Dendritic cell treated with granulocyte-macrophage colony-stimulating factor and Interleukin-4, amounts not matched to agents 40 ng/mL and 50 ng/mL, for 4 days (primary cell): ENCODE measurements at regions of chr6 and their contacts with region 1.

Region 1: GRCh38 chr6:170554013-170554795 is at the start of gene TBP:
- H3K4me3 Mint-ChIP-seq: no peak within 1 kb of the TSS
- H3K27ac Mint-ChIP-seq: no peak within 1 kb of the TSS
- H3K4me1 Mint-ChIP-seq: no peaks in the 10 kb centered on the region
- H3K27me3 Mint-ChIP-seq: no peaks in the 10 kb centered on the region

Region 2: DNA sequence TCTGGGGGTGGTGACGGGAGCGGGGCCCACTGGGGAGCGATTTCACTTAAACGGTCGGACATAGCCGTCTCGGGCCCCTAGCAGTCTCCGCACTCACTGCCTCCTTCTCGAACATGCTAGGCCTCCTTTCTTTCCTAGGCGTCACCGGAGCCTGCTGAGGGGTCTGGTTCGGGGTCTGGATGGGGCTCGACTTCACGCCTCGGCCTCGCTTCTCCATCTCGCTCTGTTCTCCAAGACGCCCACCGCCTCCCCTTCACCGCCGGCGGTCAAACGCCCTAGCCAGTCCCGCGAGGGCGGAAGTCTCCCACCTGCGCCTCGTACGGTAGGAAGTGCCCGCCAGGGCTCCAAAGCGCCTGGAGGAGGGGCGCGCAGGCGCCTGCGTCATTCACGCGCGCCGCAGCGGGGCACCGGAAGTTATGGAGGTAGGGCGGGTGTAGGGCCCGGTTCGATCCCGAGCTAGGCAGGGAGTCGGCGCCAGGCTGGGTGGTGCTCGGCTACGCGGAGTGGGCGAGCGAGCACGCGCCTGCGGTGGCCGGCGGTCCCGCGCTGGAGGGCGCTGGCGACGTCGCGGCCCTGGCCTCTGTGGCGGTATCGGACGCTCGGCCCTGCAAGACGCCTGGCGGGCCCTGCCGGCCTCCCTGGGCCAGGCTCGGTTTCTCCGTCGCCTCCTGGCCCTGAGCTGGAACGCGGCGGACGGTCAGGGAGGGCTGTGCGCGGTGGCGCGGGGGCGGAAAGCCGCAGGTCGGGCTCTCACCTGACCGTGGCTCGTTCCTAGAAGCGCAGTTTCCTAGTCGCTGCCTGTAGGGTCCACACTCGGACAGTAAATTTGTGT is 802.7 kb before region 1 on chr6 and contains the starts of genes DYNLT2 and ERMARD:
- intact Hi-C with region 1: loop called (anchors 1 kb)
- H3K4me3 Mint-ChIP-seq: peak within 1 kb of the TSS; percentile 90
- H3K27ac Mint-ChIP-seq: peak within 1 kb of the TSS; percentile 96
- H3K4me1 Mint-ChIP-seq: peaks cover 20% of the 10 kb centered on the region
- H3K27me3 Mint-ChIP-seq: no peaks in the 10 kb centered on the region

Region 3: GRCh38 chr6:170306324-170307079 is 247.7 kb before region 1 on chr6 and contains the start of gene FAM120B:
- intact Hi-C with region 1: loop called (anchors 5 kb)
- H3K4me3 Mint-ChIP-seq: peak within 1 kb of the TSS; percentile 99
- H3K27ac Mint-ChIP-seq: peak within 1 kb of the TSS; percentile 97
- H3K4me1 Mint-ChIP-seq: peaks cover 50% of the 10 kb centered on the region
- H3K27me3 Mint-ChIP-seq: peaks cover 20% of the 10 kb centered on the region

Region 4: GRCh38 chr6:170459451-170459850 is 94.8 kb before region 1 on chr6:
- intact Hi-C with region 1: no loop called
- H3K4me3 Mint-ChIP-seq: peak overlapping the region; percentile 69
- H3K27ac Mint-ChIP-seq: peak overlapping the region; percentile 57
- H3K4me1 Mint-ChIP-seq: peaks cover 9% of the 10 kb centered on the region
- H3K27me3 Mint-ChIP-seq: no peaks in the 10 kb centered on the region

Region 5: DNA sequence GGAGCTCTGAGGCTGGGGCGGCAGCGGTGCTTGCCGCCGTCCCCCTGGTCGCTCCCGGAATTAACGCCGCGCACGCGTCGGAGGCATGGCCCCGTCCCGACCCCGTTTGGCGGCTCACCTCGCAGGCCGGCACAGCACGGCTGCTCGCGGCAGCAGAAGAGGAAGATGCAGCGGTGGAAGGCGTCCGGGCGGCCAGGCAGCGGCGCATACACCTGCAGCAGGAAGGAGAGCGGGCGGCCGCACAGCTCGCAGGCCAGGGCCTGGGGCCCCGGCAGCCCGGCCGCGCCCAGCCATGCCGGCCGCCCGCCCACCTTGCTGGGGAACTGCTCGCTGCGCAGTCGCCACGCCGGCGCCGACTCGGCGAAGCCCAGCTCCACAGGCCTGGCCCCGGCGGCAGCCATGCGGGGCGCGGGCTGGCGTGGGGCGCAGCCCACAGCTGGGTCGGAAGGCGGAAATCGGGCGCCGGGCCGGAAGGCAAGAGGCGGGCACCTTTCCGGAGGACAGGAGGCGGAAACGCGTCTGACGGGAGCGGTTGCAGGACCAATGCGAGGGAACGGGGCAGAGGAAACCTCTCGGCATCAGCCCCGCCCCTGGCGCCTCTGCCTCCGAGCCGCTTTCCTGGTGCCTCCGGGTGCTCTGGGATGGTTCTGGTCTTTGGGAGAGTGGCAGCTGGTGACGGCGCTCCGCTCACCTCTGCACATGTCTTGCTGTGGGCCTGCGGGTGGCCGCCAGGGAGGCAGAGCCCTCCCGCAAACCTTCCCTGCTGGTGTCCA is 30.2 kb after region 1 on chr6 and contains the start of gene PDCD2:
- intact Hi-C with region 1: loop called (anchors 1 kb)
- H3K4me3 Mint-ChIP-seq: peak within 1 kb of the TSS; percentile 99
- H3K27ac Mint-ChIP-seq: peak within 1 kb of the TSS; percentile 84
- H3K4me1 Mint-ChIP-seq: peaks cover 32% of the 10 kb centered on the region
- H3K27me3 Mint-ChIP-seq: peaks cover 5% of the 10 kb centered on the region